ENCODE measurements at regions of chr4 and their contacts with region 1.

Region 1: DNA sequence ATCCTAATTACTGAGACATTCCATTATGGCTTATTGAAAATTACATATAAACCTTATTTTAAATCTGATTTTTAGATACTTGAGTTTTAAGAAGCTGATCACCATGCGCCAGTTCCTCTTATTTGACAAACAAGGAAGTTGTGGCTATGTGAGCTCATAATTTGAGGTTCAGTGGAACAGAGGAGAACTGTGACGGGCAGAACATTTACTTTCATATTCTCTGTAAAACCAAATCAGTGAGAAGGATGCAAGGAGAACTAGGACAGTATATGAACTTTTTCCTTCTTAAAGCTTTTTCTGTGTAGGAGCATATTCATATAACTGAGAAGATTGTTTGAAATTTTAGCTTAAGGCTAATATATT is 25.3 kb downstream of the STIM2 start:
- DNase-seq: peak in 1 of 2 donors; percentile 86
- ATAC-seq: peak; percentile 52 to 65 (median 65)
- H3K4me3 ChIP-seq: peak overlapping the region; percentile 15
- H3K4me3 Mint-ChIP-seq: peak overlapping the region; percentile 88
- H3K27ac ChIP-seq: peak overlapping the region; percentile 98
- H3K27ac Mint-ChIP-seq: peak overlapping the region; percentile 92 to 94
- H3K4me1 ChIP-seq: peaks cover 17% of the 10 kb centered on the region
- H3K4me1 Mint-ChIP-seq: peaks cover 70 to 73% of the 10 kb centered on the region in 2 donors
- H3K27me3 ChIP-seq: no peaks in the 10 kb centered on the region
- H3K27me3 Mint-ChIP-seq: no peaks in the 10 kb centered on the region
- CTCF ChIP-seq: no peak

Region 2: GRCh38 chr4:26873391-26874026 is 12.4 kb before region 1 on chr4:
- intact Hi-C with region 1: loop called (anchors 1 kb)
- DNase-seq: peak; percentile 71 to 90
- ATAC-seq: peak; percentile 84 to 95 (median 94)
- H3K4me3 ChIP-seq: no peak overlapping the region
- H3K4me3 Mint-ChIP-seq: peak overlapping the region; percentile 85
- H3K27ac ChIP-seq: peak overlapping the region; percentile 93
- H3K27ac Mint-ChIP-seq: peak overlapping the region; percentile 96 to 98
- H3K4me1 ChIP-seq: peaks cover 39% of the 10 kb centered on the region
- H3K4me1 Mint-ChIP-seq: peaks cover 77 to 82% of the 10 kb centered on the region in 2 donors
- H3K27me3 ChIP-seq: no peaks in the 10 kb centered on the region
- H3K27me3 Mint-ChIP-seq: no peaks in the 10 kb centered on the region
- CTCF ChIP-seq: no peak

Region 3: DNA sequence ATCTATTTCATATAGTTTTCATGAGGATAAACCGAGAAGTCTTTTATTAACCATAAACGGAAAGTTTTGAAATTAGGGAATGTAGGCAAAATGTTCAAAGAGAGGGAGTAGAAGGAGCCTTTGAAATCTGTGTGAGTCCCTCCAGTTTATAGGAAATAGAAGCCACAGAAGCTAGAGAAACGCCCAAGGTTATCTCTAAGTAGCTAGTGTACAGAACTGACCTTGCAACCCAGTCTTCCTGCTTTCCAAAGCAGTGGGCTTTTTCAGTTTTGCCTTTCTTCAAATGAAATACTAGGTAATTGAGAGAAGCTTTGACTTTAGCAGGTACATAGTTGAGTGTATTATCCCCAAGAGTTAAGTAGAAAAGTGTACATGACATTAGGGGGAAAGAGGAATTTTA is 14.1 kb after region 1 on chr4:
- intact Hi-C with region 1: loop called (anchors 2 kb)
- DNase-seq: peak in 1 of 2 donors; percentile 25
- ATAC-seq: peak in 2 of 3 donors; percentile 50 to 60
- H3K4me3 ChIP-seq: no peak overlapping the region
- H3K4me3 Mint-ChIP-seq: peak overlapping the region; percentile 52
- H3K27ac ChIP-seq: no peak overlapping the region
- H3K27ac Mint-ChIP-seq: peak overlapping the region; percentile 62 to 75
- H3K4me1 ChIP-seq: peaks cover 8% of the 10 kb centered on the region
- H3K4me1 Mint-ChIP-seq: peaks cover 73 to 77% of the 10 kb centered on the region in 2 donors
- H3K27me3 ChIP-seq: no peaks in the 10 kb centered on the region
- H3K27me3 Mint-ChIP-seq: no peaks in the 10 kb centered on the region
- CTCF ChIP-seq: no peak